CD8-positive, alpha-beta T cell (primary cell): ENCODE measurements at regions of chr1 and their contacts with region 1.

Region 1: DNA sequence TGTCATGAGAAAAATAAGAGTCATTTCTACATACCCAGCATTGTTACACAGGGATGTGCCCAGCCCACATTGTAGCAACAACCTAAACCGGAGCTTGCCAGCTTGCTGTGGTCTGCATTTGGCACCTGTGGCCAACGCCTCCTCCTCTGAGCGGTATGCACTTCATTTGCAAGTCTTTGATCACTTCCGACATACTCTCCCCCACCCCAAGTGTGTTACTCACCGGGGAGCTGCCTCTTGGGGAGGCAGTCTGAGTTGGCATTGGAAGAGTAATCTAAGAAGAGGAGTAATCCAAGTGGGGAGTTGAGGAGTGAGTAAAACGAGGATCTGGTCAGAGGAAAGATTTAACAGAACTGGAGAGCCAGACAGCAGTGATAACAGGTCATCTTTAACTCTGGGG is 3.8 kb downstream of the BCL9 start:
- DNase-seq: peak; percentile 68 to 95 (median 86)
- ATAC-seq: peak; percentile 81
- H3K4me3 ChIP-seq: peak overlapping the region in 1 of 2 experiments; percentile 33
- H3K4me3 Mint-ChIP-seq: peak overlapping the region; percentile 58
- H3K27ac ChIP-seq: no peak overlapping the region
- H3K27ac Mint-ChIP-seq: peak overlapping the region; percentile 84
- H3K4me1 ChIP-seq: peaks cover 61% of the 10 kb centered on the region
- H3K4me1 Mint-ChIP-seq: peaks cover 63% of the 10 kb centered on the region
- H3K27me3 ChIP-seq: peaks cover 0 to under 1% of the 10 kb centered on the region in 2 experiments
- H3K27me3 Mint-ChIP-seq: peaks cover 5% of the 10 kb centered on the region
- CTCF ChIP-seq: no peak

Region 2: DNA sequence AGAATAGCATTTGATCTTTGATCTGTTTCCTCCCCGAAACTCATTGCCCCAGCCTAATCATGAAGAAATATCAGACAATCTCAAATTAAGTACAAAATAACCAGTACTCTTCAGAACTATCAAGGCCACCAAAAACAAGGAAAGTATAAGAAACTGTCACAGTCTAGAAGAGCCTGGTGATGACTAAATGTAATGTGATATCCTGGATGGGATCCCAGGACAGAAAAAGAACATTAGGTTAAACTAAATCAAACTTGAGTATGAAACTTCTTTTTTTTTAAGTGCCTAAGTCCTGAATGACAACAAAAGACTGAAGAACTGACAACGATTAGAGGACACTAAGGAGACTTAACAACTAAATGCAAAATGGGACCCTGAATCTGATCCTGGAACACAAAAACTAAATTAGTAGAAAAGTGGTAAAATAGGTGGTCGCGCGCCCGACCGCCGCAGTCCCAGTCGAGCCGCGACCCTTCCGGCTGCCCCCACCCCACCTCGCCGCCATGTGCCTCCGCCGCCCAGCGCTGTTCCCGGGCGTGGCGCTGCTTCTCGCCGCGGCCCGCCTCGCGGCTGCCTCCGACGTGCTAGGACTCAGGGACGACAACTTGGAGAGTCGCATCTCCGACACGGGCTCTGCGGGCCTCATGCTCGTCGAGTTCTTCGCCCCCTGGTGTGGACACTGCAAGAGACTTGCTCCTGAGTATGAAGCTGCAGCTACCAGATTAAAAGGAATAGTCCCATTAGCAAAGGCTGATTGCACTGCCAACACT is 367.3 kb before region 1 on chr1:
- CTCF ChIA-PET with region 1: no interaction called
- POLR2A ChIA-PET with region 1: no interaction called
- intact Hi-C with region 1: no loop called
- DNase-seq: peak in 1 of 9 experiments; percentile 9
- ATAC-seq: no peak
- H3K4me3 ChIP-seq: no peak overlapping the region
- H3K4me3 Mint-ChIP-seq: peak overlapping the region; percentile 42
- H3K27ac ChIP-seq: no peak overlapping the region
- H3K27ac Mint-ChIP-seq: no peak overlapping the region
- H3K4me1 ChIP-seq: peaks cover 5% of the 10 kb centered on the region
- H3K4me1 Mint-ChIP-seq: peaks cover 21% of the 10 kb centered on the region
- H3K27me3 ChIP-seq: no peaks in the 10 kb centered on the region
- H3K27me3 Mint-ChIP-seq: no peaks in the 10 kb centered on the region
- CTCF ChIP-seq: no peak

Region 3: GRCh38 chr1:147463022-147463421 is 82.1 kb before region 1 on chr1:
- CTCF ChIA-PET with region 1: no interaction called
- POLR2A ChIA-PET with region 1: no interaction called
- intact Hi-C with region 1: no loop called
- DNase-seq: no peak
- ATAC-seq: no peak
- H3K4me3 ChIP-seq: no peak overlapping the region
- H3K4me3 Mint-ChIP-seq: no peak overlapping the region
- H3K27ac ChIP-seq: no peak overlapping the region
- H3K27ac Mint-ChIP-seq: no peak overlapping the region
- H3K4me1 ChIP-seq: no peaks in the 10 kb centered on the region
- H3K4me1 Mint-ChIP-seq: no peaks in the 10 kb centered on the region
- H3K27me3 ChIP-seq: no peaks in the 10 kb centered on the region
- H3K27me3 Mint-ChIP-seq: peaks cover 31% of the 10 kb centered on the region
- CTCF ChIP-seq: no peak

Region 4: DNA sequence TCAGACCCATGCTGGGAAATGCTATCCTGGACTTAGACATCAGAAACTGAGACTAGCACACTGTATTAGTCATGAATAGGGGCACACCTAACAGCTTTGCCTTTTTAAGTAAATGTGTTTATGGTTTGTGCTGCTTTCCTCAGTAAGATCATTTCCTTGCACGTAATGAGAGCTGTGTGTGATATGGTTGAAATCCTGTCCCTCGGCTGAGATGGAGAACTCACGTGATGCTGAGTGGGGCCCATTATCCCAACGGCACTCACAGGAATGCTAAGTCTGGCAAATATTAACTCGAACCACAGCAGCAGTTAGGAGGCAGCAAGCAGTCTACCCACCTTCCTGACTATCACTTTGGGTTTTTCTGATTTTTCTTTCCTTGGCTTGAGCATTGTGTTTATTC is 34.4 kb after region 1 on chr1:
- CTCF ChIA-PET with region 1: interaction called, 3 read pairs
- POLR2A ChIA-PET with region 1: interaction called, 3 read pairs
- intact Hi-C with region 1: loop called (anchors 2 to 5 kb)
- DNase-seq: peak in 1 of 9 experiments; percentile 11
- ATAC-seq: peak; percentile 62
- H3K4me3 ChIP-seq: no peak overlapping the region
- H3K4me3 Mint-ChIP-seq: peak overlapping the region; percentile 20
- H3K27ac ChIP-seq: no peak overlapping the region
- H3K27ac Mint-ChIP-seq: peak overlapping the region; percentile 12
- H3K4me1 ChIP-seq: peaks cover 24% of the 10 kb centered on the region
- H3K4me1 Mint-ChIP-seq: peaks cover 26% of the 10 kb centered on the region
- H3K27me3 ChIP-seq: peaks cover 7 to 20% of the 10 kb centered on the region in 2 experiments
- H3K27me3 Mint-ChIP-seq: peaks cover 43% of the 10 kb centered on the region
- CTCF ChIP-seq: no peak

Region 5: DNA sequence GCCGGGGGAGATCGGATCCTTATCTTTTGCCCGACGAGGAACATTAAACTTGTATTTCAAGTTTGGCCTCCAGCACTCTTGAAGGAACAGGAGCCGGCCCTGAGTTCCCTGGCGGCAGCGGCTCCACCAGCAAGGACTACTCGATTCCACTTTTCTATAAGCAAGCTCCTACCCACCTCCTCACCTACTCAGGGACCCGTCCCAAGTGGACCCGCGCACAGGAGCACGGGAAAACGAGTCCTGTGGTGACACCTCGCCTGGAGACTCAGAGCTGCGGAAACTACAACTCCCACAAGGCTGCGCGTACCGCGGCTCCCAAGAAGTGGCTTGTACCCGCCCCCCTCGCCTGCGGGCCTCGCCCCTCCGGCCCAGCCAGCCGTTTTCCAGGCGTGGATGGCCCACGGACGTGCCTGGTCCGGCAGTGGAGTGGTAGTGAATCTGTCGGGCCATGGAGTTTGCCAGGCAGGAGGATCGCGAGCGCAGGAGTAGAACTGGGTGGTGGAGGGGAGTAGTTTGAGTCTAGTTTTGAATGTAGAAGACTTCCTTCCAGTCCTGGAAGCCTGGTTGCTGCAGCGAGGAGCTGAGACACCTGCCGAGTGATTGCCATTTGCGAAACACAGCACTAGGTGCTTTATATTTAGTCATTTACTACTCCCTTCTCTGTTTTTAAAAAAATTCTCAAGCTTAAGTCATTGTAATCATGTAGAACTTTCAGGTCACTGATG is 125.3 kb after region 1 on chr1 and contains the start of gene ACP6:
- CTCF ChIA-PET with region 1: no interaction called
- POLR2A ChIA-PET with region 1: interaction called, 5 read pairs
- intact Hi-C with region 1: loop called in 1 of 2 experiments (anchors 1 kb)
- DNase-seq: peak; percentile 58 to 92 (median 85)
- ATAC-seq: peak; percentile 94
- H3K4me3 ChIP-seq: peak within 1 kb of the TSS; percentile 84 to 94
- H3K4me3 Mint-ChIP-seq: peak within 1 kb of the TSS; percentile 94
- H3K27ac ChIP-seq: peak within 1 kb of the TSS; percentile 53 to 57
- H3K27ac Mint-ChIP-seq: peak within 1 kb of the TSS; percentile 90
- H3K4me1 ChIP-seq: peaks cover 9% of the 10 kb centered on the region
- H3K4me1 Mint-ChIP-seq: peaks cover 30% of the 10 kb centered on the region
- H3K27me3 ChIP-seq: no peaks in the 10 kb centered on the region
- H3K27me3 Mint-ChIP-seq: no peaks in the 10 kb centered on the region
- CTCF ChIP-seq: no peak
- total RNA-seq, gene ACP6: 4.4 to 4.9 TPM

Region 6: DNA sequence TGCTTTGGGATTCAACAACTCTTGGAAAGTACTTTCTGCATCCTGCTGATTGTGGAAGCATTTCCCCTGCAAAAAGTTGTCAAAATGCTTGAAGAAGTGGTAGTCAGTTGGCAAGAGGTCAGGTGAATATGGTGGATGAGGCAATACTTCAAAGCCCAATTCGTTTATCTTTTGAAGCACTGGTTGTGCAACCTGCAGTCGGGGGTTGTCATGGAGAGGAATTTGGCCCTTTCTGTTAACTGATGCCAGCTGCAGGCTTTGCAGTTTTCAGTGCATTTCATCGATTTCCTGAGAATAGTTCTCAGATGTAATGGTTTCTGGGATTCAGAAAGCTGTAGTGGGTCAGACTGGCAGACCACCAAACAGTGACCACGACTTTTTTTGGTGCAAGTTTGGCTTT is 262.9 kb after region 1 on chr1:
- CTCF ChIA-PET with region 1: no interaction called
- POLR2A ChIA-PET with region 1: no interaction called
- intact Hi-C with region 1: no loop called
- DNase-seq: no peak
- ATAC-seq: no peak
- H3K4me3 ChIP-seq: no peak overlapping the region
- H3K4me3 Mint-ChIP-seq: no peak overlapping the region
- H3K27ac ChIP-seq: no peak overlapping the region
- H3K27ac Mint-ChIP-seq: no peak overlapping the region
- H3K4me1 ChIP-seq: no peaks in the 10 kb centered on the region
- H3K4me1 Mint-ChIP-seq: no peaks in the 10 kb centered on the region
- H3K27me3 ChIP-seq: no peaks in the 10 kb centered on the region
- H3K27me3 Mint-ChIP-seq: peaks cover 8% of the 10 kb centered on the region
- CTCF ChIP-seq: no peak